OCI-LY7 (cell line): ENCODE measurements at regions of chr3 and their contacts with region 1.

Region 1: DNA sequence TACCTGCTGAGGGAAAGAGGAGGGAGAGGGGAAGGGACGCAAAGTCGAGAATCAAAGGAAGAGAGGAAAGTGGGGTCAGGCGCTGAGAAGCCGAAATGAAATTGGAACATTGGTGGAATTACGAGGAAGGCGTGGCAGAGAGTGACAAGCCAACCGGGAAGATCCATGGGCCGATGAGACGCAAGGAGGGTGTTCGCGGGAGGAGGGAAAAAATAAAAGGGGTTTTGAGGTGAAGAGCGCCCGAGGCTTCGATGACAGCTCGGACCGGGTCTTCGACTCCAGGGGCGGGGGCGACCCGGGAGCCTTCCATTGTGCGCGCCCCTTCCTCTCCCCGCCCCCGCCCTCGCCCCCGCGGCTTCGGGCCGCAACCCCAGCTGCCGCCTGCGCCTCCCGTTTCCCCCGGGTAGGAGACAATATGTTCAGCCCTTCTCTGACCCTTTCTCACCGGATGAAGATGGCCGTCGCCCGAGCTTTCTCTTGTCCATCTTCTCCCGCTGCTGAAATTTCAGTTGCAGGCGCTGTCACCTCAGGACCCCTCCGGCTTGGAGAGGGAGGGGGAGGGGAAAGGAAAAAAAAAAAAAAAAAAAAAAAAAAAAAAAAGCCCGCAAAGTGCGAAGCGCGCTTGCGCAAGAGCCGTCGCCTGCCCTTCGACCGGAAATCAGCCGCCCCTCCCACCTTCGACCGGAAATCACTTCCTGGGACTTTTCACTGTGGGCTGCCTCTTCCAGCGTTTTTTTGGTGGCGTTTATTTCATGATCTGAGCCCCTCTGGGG is at the start of gene SENP7:
- DNase-seq: peak; percentile 86
- H3K4me3 ChIP-seq: peak within 1 kb of the TSS; percentile 85
- H3K27ac ChIP-seq: peak within 1 kb of the TSS; percentile 64
- H3K4me1 ChIP-seq: peaks cover 13% of the 10 kb centered on the region
- CTCF ChIP-seq: no peak
- total RNA-seq, gene SENP7: 13.6 and 17.7 TPM in 2 replicates

Region 2: GRCh38 chr3:101561630-101562328 is 48.9 kb after region 1 on chr3 and contains the start of gene TRMT10C:
- CTCF ChIA-PET with region 1: no interaction called
- POLR2A ChIA-PET with region 1: interaction called, 3 read pairs
- intact Hi-C with region 1: loop called (anchors 2 kb)
- DNase-seq: peak; percentile 95
- H3K4me3 ChIP-seq: peak within 1 kb of the TSS; percentile 97
- H3K27ac ChIP-seq: peak within 1 kb of the TSS; percentile 56
- H3K4me1 ChIP-seq: peaks cover 24% of the 10 kb centered on the region
- CTCF ChIP-seq: no peak
- total RNA-seq, gene TRMT10C: 23.6 and 26.5 TPM in 2 replicates